Activated naive CD4-positive, alpha-beta T cell treated with anti-CD3 and anti-CD28 coated beads, Interleukin-2, amount 10 ng/mL, durations not matched to agents 7 days and 5 days (primary cell): ENCODE measurements at regions of chrX and their contacts with region 1.

Region 1: DNA sequence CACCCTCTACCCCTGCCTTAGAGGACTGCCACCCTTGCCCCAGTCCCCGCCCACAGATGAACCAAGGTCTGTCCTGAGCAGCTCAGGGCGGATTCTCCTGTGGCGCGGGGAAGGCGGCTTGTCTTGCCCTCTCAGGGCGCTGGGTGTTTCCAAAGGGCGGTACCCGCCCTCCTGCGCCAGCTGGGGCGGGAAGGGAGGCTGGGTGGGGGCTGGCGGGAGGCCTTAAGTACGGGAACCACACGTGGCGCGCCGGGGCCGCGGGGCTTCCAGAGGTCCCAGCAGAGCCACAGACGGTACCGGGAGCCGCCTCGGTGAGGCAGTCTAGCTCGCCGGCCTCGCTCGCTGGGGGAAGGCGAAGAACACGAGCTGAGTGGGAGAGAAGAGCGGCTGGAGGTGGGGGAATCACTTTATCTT is 361.1 kb downstream of the MID1IP1 start:
- DNase-seq: peak; percentile 41
- H3K4me3 Mint-ChIP-seq: peak overlapping the region; percentile 5
- H3K27ac Mint-ChIP-seq: no peak overlapping the region
- H3K4me1 Mint-ChIP-seq: peaks cover 11% of the 10 kb centered on the region
- H3K27me3 Mint-ChIP-seq: peaks cover 31% of the 10 kb centered on the region

Region 2: GRCh38 chrX:39242187-39242586 is 79.9 kb after region 1 on chrX:
- CTCF ChIA-PET with region 1: interaction called, 15 read pairs
- DNase-seq: no peak
- H3K4me3 Mint-ChIP-seq: no peak overlapping the region
- H3K27ac Mint-ChIP-seq: no peak overlapping the region
- H3K4me1 Mint-ChIP-seq: peaks cover 5% of the 10 kb centered on the region
- H3K27me3 Mint-ChIP-seq: no peaks in the 10 kb centered on the region